Activated CD4-positive, alpha-beta T cell treated with anti-CD3 and anti-CD28 coated beads for 36 hours (primary cell): ENCODE measurements at regions of chr15 and their contacts with region 1.

Region 1: GRCh38 chr15:51982013-51982769 is 10.6 kb upstream of the LEO1 start:
- DNase-seq: peak; percentile 77
- ATAC-seq: peak; percentile 96
- H3K4me3 Mint-ChIP-seq: peak overlapping the region; percentile 63
- H3K27ac Mint-ChIP-seq: peak overlapping the region; percentile 78
- H3K4me1 Mint-ChIP-seq: peaks cover 16% of the 10 kb centered on the region
- H3K27me3 Mint-ChIP-seq: no peaks in the 10 kb centered on the region

Region 2: DNA sequence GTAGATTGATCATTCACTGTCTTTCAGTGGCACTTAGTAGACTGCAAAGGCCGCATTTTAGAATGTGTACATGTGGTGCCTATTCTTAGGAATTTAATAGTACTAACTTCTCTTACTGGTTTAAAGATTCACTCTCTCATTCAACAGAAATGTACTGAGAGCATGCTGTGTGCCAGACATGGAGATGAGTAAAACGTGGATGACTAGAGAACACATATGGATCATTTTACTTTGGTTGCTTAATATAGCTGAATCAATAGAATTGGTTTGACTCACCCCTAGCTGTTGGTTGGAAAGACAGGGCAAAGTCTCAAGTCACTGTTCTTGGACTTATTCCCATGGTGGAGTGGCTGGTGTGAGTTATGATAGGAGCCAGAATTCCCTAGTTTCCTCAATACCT is 778.4 kb before region 1 on chr15:
- CTCF ChIA-PET with region 1: no interaction called
- POLR2A ChIA-PET with region 1: no interaction called
- intact Hi-C with region 1: no loop called
- DNase-seq: no peak
- ATAC-seq: no peak
- H3K4me3 Mint-ChIP-seq: no peak overlapping the region
- H3K27ac Mint-ChIP-seq: no peak overlapping the region
- H3K4me1 Mint-ChIP-seq: no peaks in the 10 kb centered on the region
- H3K27me3 Mint-ChIP-seq: peaks cover 7% of the 10 kb centered on the region

Region 3: DNA sequence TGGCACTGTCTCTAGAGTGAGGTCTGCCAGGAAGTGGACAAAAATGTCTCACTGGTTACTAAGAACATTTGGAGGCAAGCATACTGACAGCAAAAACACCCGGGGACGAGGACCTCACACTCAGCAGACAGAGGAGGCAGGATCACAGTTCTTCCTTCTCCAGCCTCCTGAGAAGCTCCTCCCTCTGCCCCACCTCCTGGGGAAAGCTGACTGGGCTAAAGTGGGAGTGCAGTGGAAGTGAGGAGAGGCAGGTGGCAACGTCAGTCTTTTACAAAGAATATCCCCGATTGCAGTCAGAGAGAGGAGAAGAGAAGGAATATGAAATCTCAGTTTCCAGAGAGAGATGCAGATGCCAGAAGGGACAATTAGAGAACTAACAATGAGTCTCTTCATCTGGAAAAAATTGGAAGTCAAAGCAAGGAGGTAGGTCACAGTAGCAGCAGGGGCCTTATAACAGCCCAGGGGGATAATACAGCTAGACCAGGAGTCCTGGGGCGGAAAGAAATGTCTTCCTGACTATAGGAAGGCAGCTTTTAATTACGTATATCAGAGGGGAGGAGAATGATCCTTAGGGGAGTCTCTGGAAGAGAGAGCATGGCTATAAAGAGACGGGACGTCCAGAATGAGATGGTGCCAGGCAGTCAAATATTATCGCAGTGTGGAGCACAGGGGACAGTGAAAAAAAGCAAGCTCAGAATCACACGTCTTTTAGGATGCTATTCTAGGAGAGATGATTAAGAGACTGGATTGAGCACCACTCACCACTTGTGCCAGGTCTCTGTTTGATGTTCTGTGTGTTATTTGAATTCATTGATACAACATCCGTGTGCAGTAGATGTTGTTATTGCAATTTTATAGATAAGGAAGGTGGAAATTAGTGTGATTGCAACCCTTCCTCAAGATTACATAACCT is 57.8 kb before region 1 on chr15:
- CTCF ChIA-PET with region 1: no interaction called
- POLR2A ChIA-PET with region 1: no interaction called
- intact Hi-C with region 1: no loop called
- DNase-seq: no peak
- ATAC-seq: no peak
- H3K4me3 Mint-ChIP-seq: no peak overlapping the region
- H3K27ac Mint-ChIP-seq: peak overlapping the region; percentile 18
- H3K4me1 Mint-ChIP-seq: no peaks in the 10 kb centered on the region
- H3K27me3 Mint-ChIP-seq: no peaks in the 10 kb centered on the region

Region 4: GRCh38 chr15:52013151-52013791 is 31.1 kb after region 1 on chr15:
- CTCF ChIA-PET with region 1: no interaction called
- POLR2A ChIA-PET with region 1: no interaction called
- intact Hi-C with region 1: loop called in 1 of 2 experiments (anchors 2 kb)
- DNase-seq: no peak
- ATAC-seq: peak; percentile 65
- H3K4me3 Mint-ChIP-seq: no peak overlapping the region
- H3K27ac Mint-ChIP-seq: peak overlapping the region; percentile 32
- H3K4me1 Mint-ChIP-seq: peaks cover 50% of the 10 kb centered on the region
- H3K27me3 Mint-ChIP-seq: peaks cover 5% of the 10 kb centered on the region

Region 5: DNA sequence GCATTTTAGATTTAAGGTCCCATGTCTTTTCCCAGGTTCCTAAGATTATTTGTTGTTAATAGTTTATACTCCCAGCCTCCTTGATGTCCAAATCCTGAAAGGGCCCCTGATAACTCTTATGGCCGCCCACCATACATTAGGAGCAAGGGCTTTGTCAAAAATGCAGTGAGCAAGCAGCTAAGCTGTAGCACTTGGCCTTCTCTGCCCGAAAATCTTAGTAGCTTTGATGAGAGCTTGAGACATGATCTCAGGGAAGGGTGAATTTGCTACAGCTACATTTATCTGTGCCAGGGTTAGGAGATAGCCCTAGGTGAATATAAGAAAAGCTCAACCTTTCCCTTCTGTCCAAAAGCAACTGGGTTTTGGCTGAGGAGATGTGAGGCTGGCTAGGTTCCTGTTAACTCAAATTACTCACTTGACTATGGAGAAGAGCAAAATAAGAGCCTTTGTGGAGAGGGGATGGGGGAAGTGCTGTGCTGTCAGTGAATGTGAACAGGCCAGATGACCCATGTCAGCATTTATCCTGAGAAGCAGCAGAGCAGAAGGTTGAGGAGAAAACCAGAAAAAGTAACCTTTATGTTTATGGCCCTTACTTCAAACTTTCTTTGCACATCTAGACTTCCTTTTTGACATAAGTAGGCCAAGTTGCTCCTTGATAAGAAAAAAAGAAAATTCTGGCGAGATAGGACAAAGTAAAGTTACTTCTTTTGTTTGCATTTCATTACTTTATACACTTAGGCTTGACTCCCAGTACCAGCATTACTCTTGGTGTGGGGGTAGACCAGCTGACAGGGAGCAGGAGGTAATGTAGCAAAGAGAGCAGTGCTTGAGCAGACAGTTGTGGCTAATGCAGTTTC is 58.0 kb after region 1 on chr15:
- CTCF ChIA-PET with region 1: interaction called, 6 read pairs
- POLR2A ChIA-PET with region 1: no interaction called
- intact Hi-C with region 1: loop called (anchors 1 to 2 kb)
- DNase-seq: no peak
- ATAC-seq: no peak
- H3K4me3 Mint-ChIP-seq: no peak overlapping the region
- H3K27ac Mint-ChIP-seq: peak overlapping the region; percentile 34
- H3K4me1 Mint-ChIP-seq: peaks cover 58% of the 10 kb centered on the region
- H3K27me3 Mint-ChIP-seq: no peaks in the 10 kb centered on the region

Region 6: GRCh38 chr15:52139599-52140491 is 157.7 kb after region 1 on chr15:
- CTCF ChIA-PET with region 1: interaction called, 10 read pairs
- POLR2A ChIA-PET with region 1: no interaction called
- intact Hi-C with region 1: loop called (anchors 1 kb)
- DNase-seq: peak; percentile 86
- ATAC-seq: peak; percentile 68
- H3K4me3 Mint-ChIP-seq: no peak overlapping the region
- H3K27ac Mint-ChIP-seq: no peak overlapping the region
- H3K4me1 Mint-ChIP-seq: peaks cover 19% of the 10 kb centered on the region
- H3K27me3 Mint-ChIP-seq: no peaks in the 10 kb centered on the region